RWPE1 (cell line): ENCODE measurements at regions of chr3 and their contacts with region 1.

Region 1: DNA sequence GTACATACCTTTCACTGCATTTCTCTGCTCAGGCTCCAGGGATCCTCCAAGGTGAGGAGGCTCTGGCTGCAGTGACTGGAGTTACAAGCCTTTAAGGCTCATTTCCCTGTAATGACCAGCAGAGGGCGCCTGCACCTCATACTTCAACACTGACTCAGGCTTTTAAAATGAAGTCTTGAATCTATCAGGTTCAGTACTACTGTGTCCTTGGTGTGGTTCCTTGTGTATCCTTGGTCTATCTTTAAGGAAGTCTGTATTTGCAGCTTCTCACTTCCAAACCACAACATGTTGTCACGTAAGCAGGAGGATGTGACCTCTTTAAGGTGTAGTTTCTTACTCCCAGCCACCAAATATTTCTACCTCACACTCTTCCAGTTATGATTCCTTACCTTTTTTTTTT is 122.5 kb upstream of the ZBED2 start:
- DNase-seq: peak; percentile 79
- H3K27ac ChIP-seq: peak overlapping the region; percentile 45; the same call in 1 of the 2 replicates
- CTCF ChIP-seq: peak; percentile 92

Region 2: DNA sequence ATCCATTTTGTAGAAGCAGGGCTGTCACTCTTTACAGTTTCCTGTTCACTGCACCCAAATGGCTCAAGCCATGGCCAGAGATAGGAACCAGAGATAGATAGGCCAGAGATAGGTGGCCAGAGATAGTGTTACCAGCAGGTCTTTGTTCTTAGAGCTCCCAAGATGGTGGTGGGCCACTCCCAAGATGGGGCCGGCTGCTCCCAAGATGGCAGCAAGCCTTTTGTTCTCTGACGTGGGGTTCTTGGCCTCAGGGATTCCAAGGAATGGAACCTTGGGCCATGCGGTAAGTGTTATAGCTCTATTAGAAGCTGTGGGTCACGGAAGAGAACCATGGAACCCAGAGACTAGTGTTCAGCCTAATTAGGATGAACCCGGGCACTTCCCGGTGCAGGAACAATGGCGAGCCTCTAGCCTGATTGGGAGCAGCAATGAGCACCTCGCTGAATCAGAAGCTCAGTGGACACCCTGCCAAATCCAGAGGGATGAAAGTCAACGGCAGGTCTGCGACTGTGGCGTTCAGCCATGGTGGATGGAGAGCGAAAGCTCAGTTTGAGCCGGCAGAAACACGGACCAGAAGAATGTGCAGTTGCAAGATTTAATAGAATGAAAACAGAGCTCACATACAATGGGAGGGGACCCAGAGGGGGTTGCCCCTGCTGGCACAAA is 220.6 kb before region 1 on chr3:
- CTCF ChIA-PET with region 1: no interaction called
- POLR2A ChIA-PET with region 1: no interaction called
- DNase-seq: no peak
- H3K27ac ChIP-seq: no peak overlapping the region
- CTCF ChIP-seq: no peak

Region 3: DNA sequence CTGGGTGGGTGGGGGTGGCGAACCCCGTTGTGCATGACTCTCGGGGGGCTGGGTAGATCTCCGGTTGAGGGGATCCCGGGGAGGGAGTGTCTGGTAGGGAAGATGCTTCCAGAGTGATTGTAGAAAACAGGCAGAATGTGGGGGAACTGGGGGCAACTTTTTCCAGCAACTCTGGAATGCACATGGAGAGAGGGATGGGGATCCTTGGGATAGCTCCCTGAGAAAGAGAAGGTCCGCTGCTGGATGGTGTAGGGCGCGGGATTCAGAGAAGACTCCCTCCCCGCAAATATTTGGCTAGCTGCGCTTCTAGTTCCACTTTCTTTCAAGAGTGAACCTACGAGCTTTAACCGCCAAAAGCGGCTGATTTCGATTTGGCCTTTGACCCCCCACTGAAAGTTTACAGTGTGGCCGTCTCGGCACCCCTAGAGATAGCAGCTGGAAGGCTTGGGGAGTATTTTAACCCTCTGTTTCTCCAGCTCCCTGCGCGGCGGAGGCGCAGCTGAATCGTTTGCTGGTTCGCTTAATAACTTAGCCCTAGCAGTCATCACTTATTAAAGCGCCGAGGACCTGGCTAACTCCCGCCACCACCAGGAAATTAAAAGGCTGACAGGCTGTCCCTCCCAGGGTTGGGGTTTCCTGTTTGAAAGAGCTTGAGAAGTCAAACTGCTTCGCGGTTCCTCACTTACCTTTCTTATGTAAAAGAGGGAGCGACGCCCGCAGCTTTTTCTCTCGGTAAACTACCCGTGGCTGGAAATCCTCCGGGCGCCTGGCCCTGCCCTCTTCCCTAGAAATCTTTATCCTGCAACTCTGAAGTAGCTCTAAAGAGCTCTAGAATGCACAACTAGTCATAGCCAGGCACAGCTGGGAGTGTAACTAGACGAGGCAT is 142.6 kb after region 1 on chr3:
- CTCF ChIA-PET with region 1: interaction called, 44 read pairs
- POLR2A ChIA-PET with region 1: interaction called, 3 read pairs
- DNase-seq: peak; percentile 79
- H3K27ac ChIP-seq: peak overlapping the region; percentile 99
- CTCF ChIP-seq: peak; percentile 64

Region 4: GRCh38 chr3:111967651-111968274 is 250.2 kb after region 1 on chr3:
- CTCF ChIA-PET with region 1: interaction called, 15 read pairs
- POLR2A ChIA-PET with region 1: no interaction called
- DNase-seq: peak; percentile 50
- H3K27ac ChIP-seq: no peak overlapping the region
- CTCF ChIP-seq: peak; percentile 88

Region 5: GRCh38 chr3:112473212-112473640 is 755.6 kb after region 1 on chr3:
- CTCF ChIA-PET with region 1: no interaction called
- POLR2A ChIA-PET with region 1: no interaction called
- DNase-seq: no peak
- H3K27ac ChIP-seq: no peak overlapping the region
- CTCF ChIP-seq: no peak